Activated naive CD4-positive, alpha-beta T cell treated with anti-CD3 and anti-CD28 coated beads for 36 hours (primary cell): ENCODE measurements at regions of chr9 and their contacts with region 1.

Region 1: DNA sequence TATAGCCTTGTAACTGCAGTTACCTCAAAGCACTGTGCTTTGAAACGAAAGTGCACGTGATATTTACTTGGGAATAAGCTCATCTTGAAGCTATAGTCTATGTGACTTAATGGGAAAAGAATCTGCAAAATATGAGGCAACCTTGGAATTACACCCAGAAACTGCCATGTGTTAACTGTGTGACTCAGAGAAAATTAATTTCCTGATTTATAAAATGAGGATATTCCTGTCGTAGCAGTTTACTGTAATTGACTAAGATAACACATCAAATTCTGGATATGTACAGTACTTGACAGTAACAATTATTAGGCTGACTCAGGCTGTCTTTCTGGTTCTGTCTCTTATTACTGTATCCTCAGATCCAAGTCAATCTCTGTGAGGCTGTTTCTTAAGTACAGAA is 1079.9 kb upstream of the ACO1 start:
- DNase-seq: no peak
- H3K4me3 Mint-ChIP-seq: no peak overlapping the region
- H3K27ac Mint-ChIP-seq: no peak overlapping the region
- H3K4me1 Mint-ChIP-seq: peaks cover 19% of the 10 kb centered on the region
- H3K27me3 Mint-ChIP-seq: no peaks in the 10 kb centered on the region

Region 2: DNA sequence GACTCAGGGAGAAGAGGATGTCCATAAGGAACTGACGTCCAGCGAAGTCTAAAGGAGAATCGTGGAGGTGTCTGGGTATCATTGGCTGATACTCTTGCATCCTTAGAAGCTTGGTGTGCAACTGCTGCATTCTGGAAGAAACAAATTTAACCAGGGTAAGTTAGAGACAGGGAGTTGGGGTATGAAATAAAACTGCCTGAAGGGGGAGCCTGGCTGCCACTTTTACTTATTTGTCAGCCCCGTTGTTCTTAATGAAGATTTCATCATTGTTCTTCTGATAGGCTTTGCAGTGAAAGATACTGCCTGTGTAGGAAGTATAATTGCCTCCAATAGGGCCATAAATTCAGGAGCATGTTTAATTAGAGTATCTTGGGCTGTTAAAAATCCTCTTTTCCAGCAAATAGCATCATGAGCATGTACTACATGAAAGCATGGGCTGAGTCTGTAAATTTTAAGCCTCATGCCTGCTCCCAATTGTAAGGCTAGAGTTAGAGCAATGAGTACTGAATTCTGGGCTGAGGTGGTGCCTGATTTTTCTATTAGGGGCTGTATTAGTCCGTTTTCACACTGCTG is 184.6 kb before region 1 on chr9:
- CTCF ChIA-PET with region 1: no interaction called
- intact Hi-C with region 1: loop called (anchors 1 kb)
- DNase-seq: peak; percentile 52
- H3K4me3 Mint-ChIP-seq: no peak overlapping the region
- H3K27ac Mint-ChIP-seq: no peak overlapping the region
- H3K4me1 Mint-ChIP-seq: peaks cover 5% of the 10 kb centered on the region
- H3K27me3 Mint-ChIP-seq: no peaks in the 10 kb centered on the region

Region 3: DNA sequence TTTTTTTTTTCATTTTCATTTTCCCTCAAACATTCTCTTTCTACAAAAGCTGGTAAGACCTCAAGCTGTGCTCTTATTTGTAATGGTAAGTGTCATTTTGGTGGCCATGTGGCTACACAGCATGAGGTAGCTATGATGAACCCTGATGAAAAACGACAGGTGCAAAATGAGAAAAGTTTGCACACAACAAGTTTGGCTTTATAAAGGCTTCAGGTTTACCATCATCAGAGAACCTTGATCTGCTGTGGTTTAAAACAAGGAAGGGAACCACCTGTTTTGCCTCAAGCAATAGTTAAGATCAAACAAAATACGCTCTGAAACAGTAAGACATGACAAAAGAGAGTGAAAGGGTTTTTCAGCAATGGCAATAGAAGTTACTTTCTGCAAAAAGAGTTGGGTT is 44.8 kb before region 1 on chr9:
- CTCF ChIA-PET with region 1: no interaction called
- intact Hi-C with region 1: loop called (anchors 2 kb)
- DNase-seq: peak; percentile 25
- H3K4me3 Mint-ChIP-seq: peak overlapping the region; percentile 17
- H3K27ac Mint-ChIP-seq: peak overlapping the region; percentile 71
- H3K4me1 Mint-ChIP-seq: peaks cover 18% of the 10 kb centered on the region
- H3K27me3 Mint-ChIP-seq: no peaks in the 10 kb centered on the region

Region 4: DNA sequence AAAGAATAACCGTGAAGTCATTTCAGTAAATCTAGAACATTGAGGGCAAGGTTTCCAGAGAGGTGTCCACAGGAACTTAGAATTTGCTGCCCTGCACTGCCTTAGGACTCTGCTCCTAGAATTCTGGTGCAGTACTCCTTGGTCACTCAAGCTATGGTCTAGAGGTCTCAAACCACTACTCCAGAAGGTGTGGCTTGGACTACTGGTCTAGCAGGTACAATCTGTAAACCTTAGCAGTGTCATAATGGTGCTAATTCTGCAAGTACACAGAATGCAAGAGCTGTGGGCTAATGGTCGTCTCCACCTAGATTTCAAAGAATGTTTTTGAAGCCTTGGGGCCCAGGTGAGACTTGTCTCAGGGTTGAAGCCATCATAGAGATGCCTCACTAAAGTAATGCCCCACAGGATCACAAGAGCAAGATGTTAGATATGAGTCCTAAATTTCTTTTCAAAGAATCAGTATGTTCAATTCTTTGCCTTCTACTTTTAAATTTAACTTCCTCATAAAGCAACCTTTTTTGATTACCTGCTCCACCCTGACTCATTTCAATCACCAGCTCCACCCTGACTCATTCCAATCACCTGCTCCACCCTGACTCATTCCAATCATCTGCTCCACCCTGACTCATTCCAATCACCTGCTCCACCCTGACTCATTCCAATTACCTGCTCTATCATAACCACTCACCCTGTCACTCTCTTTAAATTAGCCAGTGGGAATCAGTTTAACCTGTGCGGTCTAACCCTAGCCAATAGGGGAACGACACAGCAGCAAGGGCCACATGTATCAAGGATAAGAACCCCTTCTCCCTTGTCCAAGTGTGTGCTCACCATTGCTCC is 31.9 kb before region 1 on chr9:
- CTCF ChIA-PET with region 1: no interaction called
- intact Hi-C with region 1: loop called (anchors 2 kb)
- DNase-seq: peak; percentile 71
- H3K4me3 Mint-ChIP-seq: no peak overlapping the region
- H3K27ac Mint-ChIP-seq: no peak overlapping the region
- H3K4me1 Mint-ChIP-seq: peaks cover 13% of the 10 kb centered on the region
- H3K27me3 Mint-ChIP-seq: no peaks in the 10 kb centered on the region

Region 5: DNA sequence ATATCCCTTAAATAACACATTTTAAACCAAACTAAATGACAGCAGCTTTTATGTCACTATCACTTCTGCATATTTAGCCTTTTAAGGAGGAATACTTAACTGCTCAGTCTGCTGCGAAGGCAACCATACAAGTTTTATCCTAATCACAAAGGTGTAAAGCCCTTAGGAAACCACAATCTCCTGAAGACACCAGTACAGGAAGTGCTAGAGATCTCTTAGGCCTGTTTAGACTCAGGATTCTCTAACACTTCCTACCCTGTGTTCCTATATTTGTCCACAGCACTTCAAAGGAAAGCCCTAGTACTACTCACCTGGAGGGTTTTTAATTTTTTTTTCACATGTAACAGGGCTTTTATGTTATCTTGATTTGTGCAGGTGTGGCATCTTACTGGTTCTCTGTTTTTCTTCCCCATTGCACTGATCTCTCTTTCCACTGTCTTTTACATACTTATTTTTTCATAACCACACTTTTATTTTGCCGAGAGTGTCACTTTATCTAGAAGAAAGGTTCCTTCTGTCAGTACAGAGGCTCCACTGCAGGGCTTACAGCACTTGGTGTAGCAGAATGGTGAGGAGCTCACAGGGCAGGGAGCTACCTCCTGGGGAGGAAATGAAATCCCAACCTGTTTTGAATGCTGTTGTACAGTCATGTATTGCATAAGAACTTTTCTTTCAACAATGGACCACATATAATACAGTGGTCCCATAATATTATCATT is 19.3 kb after region 1 on chr9:
- CTCF ChIA-PET with region 1: no interaction called
- intact Hi-C with region 1: loop called (anchors 2 kb)
- DNase-seq: no peak
- H3K4me3 Mint-ChIP-seq: no peak overlapping the region
- H3K27ac Mint-ChIP-seq: peak overlapping the region; percentile 71
- H3K4me1 Mint-ChIP-seq: peaks cover 25% of the 10 kb centered on the region
- H3K27me3 Mint-ChIP-seq: no peaks in the 10 kb centered on the region

Region 6: DNA sequence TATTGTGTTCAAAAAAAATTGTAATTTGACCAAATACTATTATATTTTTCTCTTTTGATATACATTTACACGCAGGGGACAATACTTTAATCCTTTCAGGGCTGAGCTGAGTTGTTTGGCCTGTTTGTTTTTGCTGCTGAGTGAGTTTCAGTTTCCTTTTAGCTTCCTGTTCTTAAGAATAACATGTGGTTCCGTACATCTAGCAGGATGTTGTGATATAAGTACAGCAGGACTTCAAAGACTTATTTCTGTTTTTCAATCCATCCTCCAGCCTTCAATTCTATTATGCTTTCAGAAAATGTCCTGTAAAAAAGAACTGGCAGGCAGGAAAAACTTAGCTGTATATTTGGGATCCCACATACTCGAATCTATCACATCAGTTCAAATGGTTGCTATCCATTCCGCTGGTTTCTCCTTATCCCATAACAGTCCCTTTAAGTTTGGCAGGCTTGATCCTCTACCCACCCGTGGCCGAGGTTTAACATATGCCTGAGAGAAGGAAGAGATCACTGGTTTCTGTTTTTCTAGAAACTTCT is 42.6 kb after region 1 on chr9:
- CTCF ChIA-PET with region 1: no interaction called
- intact Hi-C with region 1: loop called (anchors 2 kb)
- DNase-seq: peak; percentile 10
- H3K4me3 Mint-ChIP-seq: peak overlapping the region; percentile 66
- H3K27ac Mint-ChIP-seq: peak overlapping the region; percentile 93
- H3K4me1 Mint-ChIP-seq: peaks cover 27% of the 10 kb centered on the region
- H3K27me3 Mint-ChIP-seq: no peaks in the 10 kb centered on the region

Region 7: DNA sequence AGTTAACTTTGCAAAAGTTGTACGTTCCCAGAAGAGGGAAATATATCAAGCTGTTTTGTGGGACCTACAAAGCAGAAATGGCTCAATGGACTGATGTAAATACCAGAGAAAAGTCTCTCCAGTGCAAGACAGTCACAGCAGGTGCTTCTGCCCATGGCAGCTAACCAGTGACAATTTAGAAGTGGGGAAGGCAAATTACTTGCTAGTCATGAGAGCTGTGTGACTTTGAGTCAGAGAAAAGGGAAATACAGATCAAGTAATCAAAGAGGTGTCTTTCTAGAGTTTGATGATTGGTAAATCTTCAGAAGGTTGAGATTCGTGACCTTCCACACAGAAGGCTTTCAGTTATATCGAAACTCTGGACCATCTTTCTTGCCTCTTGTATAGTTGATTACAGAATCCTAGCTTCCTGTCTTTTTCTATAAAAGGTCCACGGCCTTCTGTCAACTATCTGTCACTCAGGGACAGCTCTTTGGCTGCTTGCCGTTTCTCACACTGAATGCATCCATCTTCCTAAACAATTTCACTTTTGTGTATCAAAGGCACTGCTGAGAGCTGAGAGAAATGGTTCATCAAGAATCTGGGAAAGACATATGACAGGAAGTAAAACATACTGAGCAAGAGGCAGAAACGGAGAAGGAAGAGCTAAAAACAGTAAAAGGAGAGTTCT is 85.9 kb after region 1 on chr9:
- CTCF ChIA-PET with region 1: no interaction called
- intact Hi-C with region 1: no loop called
- DNase-seq: peak; percentile 6
- H3K4me3 Mint-ChIP-seq: no peak overlapping the region
- H3K27ac Mint-ChIP-seq: peak overlapping the region; percentile 21
- H3K4me1 Mint-ChIP-seq: peaks cover 17% of the 10 kb centered on the region
- H3K27me3 Mint-ChIP-seq: no peaks in the 10 kb centered on the region

Region 8: GRCh38 chr9:31799953-31800609 is 495.5 kb after region 1 on chr9:
- CTCF ChIA-PET with region 1: no interaction called
- intact Hi-C with region 1: loop called (anchors 10 kb)
- DNase-seq: no peak
- H3K4me3 Mint-ChIP-seq: no peak overlapping the region
- H3K27ac Mint-ChIP-seq: no peak overlapping the region
- H3K4me1 Mint-ChIP-seq: peaks cover 10% of the 10 kb centered on the region
- H3K27me3 Mint-ChIP-seq: peaks cover 2% of the 10 kb centered on the region

Region 9: GRCh38 chr9:32906213-32906612 is 1601.6 kb after region 1 on chr9:
- CTCF ChIA-PET with region 1: no interaction called
- intact Hi-C with region 1: no loop called
- DNase-seq: no peak
- H3K4me3 Mint-ChIP-seq: no peak overlapping the region
- H3K27ac Mint-ChIP-seq: no peak overlapping the region
- H3K4me1 Mint-ChIP-seq: no peaks in the 10 kb centered on the region
- H3K27me3 Mint-ChIP-seq: peaks cover 4% of the 10 kb centered on the region